ENCODE measurements at regions of chr1 and their contacts with region 1.

Region 1: GRCh38 chr1:145858894-145859490 is at the start of gene PIAS3:
- DNase-seq: peak; percentile 96 to 98 (median 98)
- ATAC-seq: peak; percentile 96 to 97 (median 96)
- H3K4me3 ChIP-seq: peak within 1 kb of the TSS; percentile 55 to 97 (median 90)
- H3K27ac ChIP-seq: peak within 1 kb of the TSS; percentile 89 to 95 (median 92)
- H3K4me1 ChIP-seq: peaks cover 0 to 22% (median 13%) of the 10 kb centered on the region in 12 donors
- H3K27me3 ChIP-seq: no peaks in the 10 kb centered on the region
- CTCF ChIP-seq: no peak
- POLR2A ChIP-seq: peak in 1 of 2 donors; percentile 91
- total RNA-seq, gene PIAS3: 14.2 to 25.8 (median 15.6) TPM

Region 2: DNA sequence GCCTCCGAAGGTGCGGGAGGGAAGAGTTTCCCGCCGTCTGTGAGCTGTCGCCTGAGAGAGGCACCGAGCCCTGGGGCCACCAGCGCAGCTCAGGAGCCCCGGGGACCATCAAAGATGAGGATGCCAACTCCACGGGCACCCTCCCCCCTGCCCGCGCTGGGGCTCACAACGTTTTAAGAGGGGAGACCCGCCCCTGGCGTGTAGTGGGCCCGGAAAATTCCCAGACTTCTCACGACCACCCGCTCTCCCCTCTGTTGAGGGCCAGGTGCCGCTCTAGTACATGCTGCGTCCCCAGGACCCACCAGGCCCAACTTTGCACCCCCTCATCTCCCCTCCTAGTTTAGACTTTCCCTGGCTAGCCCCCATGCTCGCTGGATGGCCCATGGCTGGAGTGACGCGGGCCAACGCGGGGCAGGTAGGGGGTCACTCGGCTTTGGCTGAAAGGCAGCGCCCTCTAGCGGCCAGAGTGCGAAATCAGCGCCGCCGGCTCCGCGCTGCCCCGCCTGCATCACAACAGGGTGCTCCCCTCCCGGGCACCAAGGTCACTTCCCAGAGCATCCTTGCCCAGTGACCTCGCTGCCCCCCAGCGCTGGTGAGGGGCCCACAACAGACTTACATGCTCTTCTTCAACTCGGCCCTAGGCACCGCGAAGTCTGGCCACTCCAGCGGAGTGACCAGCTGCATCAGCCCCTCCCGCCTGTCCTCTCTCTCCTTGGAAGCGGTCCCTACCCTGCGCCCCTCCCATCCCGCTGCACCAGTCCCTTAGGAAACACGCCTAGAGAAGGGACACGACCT is 137.9 kb before region 1 on chr1:
- intact Hi-C with region 1: no loop called
- DNase-seq: peak; percentile 59 to 86 (median 73)
- ATAC-seq: peak; percentile 70 to 96 (median 93)
- H3K4me3 ChIP-seq: peak overlapping the region in 11 of 12 donors; percentile 2 to 52 (median 38)
- H3K27ac ChIP-seq: no peak overlapping the region
- H3K4me1 ChIP-seq: peaks cover 0 to 13% (median 10%) of the 10 kb centered on the region in 12 donors
- H3K27me3 ChIP-seq: peaks cover 0 to 6% (median 0%) of the 10 kb centered on the region in 9 donors
- CTCF ChIP-seq: peak; percentile 91 to 98 (median 94)
- POLR2A ChIP-seq: no peak

Region 3: DNA sequence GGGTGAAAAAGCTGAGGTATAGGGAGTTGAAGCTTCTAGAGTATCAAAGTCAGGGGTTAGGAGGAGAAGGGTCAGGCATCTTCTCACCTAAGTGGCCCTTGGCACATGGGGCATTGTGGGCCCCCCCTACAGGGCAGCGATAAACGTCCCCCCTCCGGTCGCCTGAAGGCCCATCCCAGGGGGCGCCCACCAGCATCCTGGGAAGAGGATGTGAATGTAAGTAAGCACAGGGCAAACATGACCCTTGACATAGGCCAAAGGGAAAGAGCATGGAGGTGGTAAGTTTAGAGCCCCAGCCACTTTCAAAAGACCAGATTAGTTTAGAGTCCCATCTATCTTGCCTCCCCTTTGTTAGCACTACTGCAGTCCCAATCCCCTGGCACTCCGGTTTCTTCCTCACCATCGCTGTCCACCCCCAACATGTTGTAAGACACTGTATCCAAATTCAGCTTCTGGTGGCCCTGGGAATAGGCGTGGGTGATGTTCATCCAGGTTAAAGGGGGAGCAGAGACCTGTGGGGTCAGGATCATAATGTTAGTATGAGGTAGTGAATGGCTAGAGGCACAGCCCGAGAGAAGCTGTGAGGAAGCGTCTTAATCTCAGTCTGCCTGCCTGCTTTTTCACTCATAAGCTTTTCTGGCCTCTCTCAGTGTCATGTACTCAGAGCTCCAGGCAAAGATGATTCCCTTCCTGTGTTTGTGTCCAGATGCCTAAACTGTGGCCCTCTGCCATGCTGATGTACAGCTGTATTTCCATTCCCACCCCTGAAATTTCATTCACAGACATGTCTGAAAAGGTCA is 48.2 kb after region 1 on chr1:
- intact Hi-C with region 1: loop called in 2 of 10 experiments (anchors 5 kb)
- DNase-seq: no peak
- ATAC-seq: peak; percentile 40 to 82 (median 54)
- H3K4me3 ChIP-seq: no peak overlapping the region
- H3K27ac ChIP-seq: peak overlapping the region in 11 of 12 donors; percentile 14 to 69 (median 41)
- H3K4me1 ChIP-seq: peaks cover 0 to 28% (median 19%) of the 10 kb centered on the region in 12 donors
- H3K27me3 ChIP-seq: no peaks in the 10 kb centered on the region
- CTCF ChIP-seq: no peak
- POLR2A ChIP-seq: no peak

Region 4: DNA sequence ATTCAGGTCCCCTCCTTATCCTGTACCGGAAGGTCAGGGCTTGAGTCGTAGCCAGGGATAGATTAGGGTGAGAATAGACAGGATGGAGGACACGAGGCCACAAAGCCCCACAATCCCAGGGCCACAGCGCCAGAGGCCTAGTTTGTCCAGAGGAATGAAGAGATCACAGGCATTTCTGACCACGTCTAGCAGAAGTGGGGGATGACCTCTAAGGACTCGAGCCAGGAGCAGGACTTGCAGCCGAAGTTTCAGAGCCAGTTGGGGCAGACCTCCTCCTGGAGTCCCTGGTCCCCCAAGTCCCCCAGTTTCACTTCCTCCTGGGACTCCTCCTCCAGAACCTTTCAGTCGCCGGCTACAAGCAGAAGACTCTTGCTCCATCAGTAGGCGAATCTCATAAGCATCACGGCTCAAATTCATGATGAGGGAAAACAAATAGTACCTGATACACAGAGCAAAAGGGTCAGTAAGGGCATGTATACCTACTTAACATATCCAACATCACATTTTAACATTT is 53.2 kb after region 1 on chr1:
- intact Hi-C with region 1: loop called in 2 of 10 experiments (anchors 5 kb)
- DNase-seq: no peak
- ATAC-seq: no peak
- H3K4me3 ChIP-seq: no peak overlapping the region
- H3K27ac ChIP-seq: no peak overlapping the region
- H3K4me1 ChIP-seq: peaks cover 0 to 34% (median 23%) of the 10 kb centered on the region in 12 donors
- H3K27me3 ChIP-seq: no peaks in the 10 kb centered on the region
- CTCF ChIP-seq: no peak
- POLR2A ChIP-seq: no peak

Region 5: DNA sequence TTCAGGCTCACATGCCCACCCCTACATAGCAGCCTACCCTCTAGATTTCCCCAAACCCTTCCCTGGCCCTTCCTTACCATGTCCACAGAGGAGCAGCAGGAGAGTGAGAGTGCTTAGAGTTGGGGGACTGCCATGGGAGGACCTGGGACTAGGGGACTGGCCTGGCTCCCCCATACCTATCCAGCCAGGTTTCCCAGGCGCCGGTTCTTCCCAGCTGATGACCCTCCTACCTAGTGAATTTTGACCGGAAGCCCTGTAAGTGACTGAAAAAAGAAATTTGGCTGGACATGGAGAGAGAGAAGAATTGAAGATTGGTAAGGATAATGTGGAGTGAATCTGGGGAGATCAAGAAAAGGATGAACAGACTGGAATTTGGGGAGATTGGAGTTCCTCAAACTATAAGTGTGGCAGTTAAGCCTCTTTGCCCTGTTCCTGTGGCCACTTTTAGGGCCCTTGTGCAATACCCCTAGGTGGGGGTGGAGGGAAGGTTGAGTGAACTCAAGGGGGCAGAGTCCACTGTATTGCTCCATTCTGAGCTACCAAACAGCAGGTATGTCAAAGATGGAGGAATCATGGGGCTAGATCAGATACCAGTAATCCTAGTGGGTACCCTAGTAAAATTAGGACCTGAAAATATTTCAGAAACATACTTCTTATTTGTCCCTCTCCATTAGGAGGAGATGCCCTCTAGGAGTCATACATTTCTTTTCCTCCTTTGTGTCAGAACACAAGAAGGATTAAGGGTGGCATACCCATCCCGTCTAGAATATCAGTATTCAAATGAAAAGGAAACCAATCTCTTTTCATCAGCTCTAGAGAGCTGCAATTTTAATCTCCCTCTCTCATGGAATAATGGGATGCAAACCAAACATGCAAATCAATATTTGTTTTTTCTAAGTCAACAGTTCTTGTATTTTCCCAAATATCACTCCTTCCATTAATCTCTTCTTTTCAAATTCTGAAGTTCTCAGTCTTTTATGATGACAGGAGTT is 161.4 kb after region 1 on chr1:
- intact Hi-C with region 1: no loop called
- DNase-seq: no peak
- ATAC-seq: peak in 3 of 4 donors; percentile 10 to 51 (median 32)
- H3K4me3 ChIP-seq: peak overlapping the region in 11 of 12 donors; percentile 12 to 55 (median 43)
- H3K27ac ChIP-seq: peak overlapping the region in 9 of 12 donors; percentile 34 to 92 (median 76)
- H3K4me1 ChIP-seq: peaks cover 0 to 22% (median 5%) of the 10 kb centered on the region in 12 donors
- H3K27me3 ChIP-seq: peaks cover 0 to 25% (median 0%) of the 10 kb centered on the region in 9 donors
- CTCF ChIP-seq: no peak
- POLR2A ChIP-seq: no peak